ENCODE measurements at regions of chr12 and their contacts with region 1.

Region 1: DNA sequence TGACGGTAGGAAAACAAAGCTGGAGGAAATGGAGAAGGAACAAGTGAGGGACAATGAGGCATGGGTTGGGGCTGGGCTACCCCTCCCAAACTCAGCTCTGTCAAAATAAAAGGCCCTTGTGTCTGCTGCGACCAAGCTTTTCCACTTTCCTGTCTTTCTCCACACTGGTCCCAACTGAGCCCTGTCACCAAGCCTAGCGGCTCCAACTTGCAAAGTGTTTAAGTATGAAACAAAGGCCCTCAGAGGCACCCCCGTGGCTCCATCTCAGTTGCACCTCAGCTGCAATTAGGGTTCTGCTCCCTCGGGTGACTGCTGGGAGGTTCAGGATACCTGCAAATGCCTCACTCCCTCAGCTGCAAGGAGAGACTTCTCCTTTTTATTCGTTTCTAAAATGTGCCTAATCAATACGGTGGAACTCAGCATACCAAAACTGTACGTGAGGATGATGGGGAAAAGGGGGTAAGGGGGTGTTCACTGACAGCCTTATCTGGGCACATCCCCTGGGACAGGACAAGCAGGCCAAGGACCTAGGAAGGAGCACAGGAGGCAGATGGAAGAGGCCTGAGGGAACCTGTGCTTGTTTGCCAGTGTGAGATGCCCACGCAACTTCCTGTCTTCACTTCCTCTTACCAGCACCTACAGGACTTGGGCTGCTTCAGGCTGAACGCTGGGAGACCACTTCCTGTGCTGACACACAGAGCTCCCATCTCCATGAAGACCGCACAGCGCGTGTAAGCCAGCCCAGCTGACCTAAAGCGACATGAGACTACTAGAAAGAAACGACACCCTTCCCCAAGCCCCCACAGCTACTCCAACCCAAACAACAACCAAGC is 8.9 kb downstream of the VAMP1 start:
- DNase-seq: peak; percentile 96
- ATAC-seq: peak; percentile 81
- H3K4me3 Mint-ChIP-seq: peak overlapping the region; percentile 76
- H3K27ac Mint-ChIP-seq: peak overlapping the region; percentile 97
- H3K4me1 Mint-ChIP-seq: peaks cover 83% of the 10 kb centered on the region
- H3K27me3 Mint-ChIP-seq: no peaks in the 10 kb centered on the region
- CTCF ChIP-seq: no peak

Region 2: DNA sequence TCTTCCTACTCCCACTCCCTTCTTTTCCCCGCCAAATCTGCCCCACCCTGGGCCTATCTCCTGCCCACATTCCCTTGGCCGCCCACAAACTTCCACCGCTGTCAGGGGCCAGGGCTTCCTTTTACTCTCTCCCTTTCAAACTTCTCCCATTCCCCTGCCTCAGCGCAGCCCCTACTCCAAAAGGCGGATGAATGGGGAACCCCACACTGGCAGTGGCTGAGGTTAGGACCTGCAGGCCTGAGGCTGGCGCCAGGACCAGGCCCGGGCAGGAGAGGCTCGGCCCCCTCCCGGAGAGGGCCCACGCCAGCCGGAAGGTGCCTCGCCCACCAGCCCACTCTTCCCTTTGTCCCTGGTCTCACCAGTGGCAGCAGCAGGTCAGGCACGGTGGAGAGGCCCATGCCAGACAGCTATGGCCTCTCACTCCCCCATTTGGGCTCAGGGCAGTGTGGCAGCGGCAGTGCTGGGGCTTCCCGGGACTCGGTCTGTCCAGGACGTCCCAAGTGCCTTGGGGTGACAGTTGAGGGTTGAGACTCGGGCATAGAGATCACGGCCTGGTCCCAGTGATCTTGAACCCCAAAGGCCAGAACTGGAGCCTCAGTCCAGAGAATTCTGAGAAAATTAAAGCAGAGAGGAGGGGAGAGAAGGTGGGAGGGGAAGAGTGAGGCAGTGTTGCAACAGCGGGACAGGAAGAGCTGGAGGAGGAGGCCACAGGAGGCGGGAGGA is 120.0 kb before region 1 on chr12 and contains the start of gene TNFRSF1A:
- CTCF ChIA-PET with region 1: interaction called, 31 read pairs
- POLR2A ChIA-PET with region 1: interaction called, 12 read pairs
- intact Hi-C with region 1: loop called (anchors 10 kb)
- DNase-seq: peak; percentile 62
- ATAC-seq: peak; percentile 27
- H3K4me3 Mint-ChIP-seq: no peak within 1 kb of the TSS
- H3K27ac Mint-ChIP-seq: no peak within 1 kb of the TSS
- H3K4me1 Mint-ChIP-seq: peaks cover 40% of the 10 kb centered on the region
- H3K27me3 Mint-ChIP-seq: no peaks in the 10 kb centered on the region
- CTCF ChIP-seq: no peak
- total RNA-seq, gene TNFRSF1A: 40.6 TPM

Region 3: GRCh38 chr12:6434205-6435140 is 27.1 kb before region 1 on chr12:
- CTCF ChIA-PET with region 1: interaction called, 145 read pairs
- POLR2A ChIA-PET with region 1: interaction called, 267 read pairs
- intact Hi-C with region 1: no loop called
- DNase-seq: peak; percentile 72
- ATAC-seq: peak; percentile 84
- H3K4me3 Mint-ChIP-seq: peak overlapping the region; percentile 63
- H3K27ac Mint-ChIP-seq: peak overlapping the region; percentile 90
- H3K4me1 Mint-ChIP-seq: peaks cover 71% of the 10 kb centered on the region
- H3K27me3 Mint-ChIP-seq: no peaks in the 10 kb centered on the region
- CTCF ChIP-seq: no peak

Region 4: DNA sequence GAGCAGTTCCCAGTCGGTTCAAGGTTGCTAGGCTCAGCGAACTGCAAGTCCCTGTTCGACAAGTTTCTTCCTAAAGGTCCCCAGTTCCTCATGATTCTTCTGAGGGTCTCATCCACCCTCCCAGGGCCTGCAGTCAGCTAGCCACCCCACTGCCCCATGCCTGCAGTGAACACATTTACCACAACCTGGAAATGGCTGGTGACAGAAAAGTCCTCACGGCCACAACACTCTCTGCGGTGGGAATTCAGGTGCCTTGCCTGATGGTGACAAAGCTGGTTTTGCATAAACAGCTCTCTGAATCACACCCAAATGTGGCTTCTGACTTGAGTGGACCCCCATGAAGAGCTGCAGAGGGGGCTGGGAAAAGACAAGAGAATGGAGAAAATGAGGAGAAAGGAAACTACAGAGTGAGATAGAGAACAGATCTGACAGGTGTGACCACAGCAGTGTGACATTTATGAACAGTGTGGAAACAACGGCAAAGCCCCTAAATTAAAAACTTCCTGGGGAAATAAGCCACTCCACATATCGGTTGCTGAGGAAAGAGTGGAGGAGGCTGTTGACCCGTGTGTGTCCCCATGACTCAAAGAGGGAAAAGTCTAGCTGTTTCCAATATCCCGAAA is 18.1 kb before region 1 on chr12:
- CTCF ChIA-PET with region 1: interaction called, 78 read pairs
- POLR2A ChIA-PET with region 1: interaction called, 267 read pairs
- intact Hi-C with region 1: no loop called
- DNase-seq: peak; percentile 84
- ATAC-seq: peak; percentile 68
- H3K4me3 Mint-ChIP-seq: peak overlapping the region; percentile 93
- H3K27ac Mint-ChIP-seq: peak overlapping the region; percentile 99
- H3K4me1 Mint-ChIP-seq: peaks cover 61% of the 10 kb centered on the region
- H3K27me3 Mint-ChIP-seq: no peaks in the 10 kb centered on the region
- CTCF ChIP-seq: no peak

Region 5: DNA sequence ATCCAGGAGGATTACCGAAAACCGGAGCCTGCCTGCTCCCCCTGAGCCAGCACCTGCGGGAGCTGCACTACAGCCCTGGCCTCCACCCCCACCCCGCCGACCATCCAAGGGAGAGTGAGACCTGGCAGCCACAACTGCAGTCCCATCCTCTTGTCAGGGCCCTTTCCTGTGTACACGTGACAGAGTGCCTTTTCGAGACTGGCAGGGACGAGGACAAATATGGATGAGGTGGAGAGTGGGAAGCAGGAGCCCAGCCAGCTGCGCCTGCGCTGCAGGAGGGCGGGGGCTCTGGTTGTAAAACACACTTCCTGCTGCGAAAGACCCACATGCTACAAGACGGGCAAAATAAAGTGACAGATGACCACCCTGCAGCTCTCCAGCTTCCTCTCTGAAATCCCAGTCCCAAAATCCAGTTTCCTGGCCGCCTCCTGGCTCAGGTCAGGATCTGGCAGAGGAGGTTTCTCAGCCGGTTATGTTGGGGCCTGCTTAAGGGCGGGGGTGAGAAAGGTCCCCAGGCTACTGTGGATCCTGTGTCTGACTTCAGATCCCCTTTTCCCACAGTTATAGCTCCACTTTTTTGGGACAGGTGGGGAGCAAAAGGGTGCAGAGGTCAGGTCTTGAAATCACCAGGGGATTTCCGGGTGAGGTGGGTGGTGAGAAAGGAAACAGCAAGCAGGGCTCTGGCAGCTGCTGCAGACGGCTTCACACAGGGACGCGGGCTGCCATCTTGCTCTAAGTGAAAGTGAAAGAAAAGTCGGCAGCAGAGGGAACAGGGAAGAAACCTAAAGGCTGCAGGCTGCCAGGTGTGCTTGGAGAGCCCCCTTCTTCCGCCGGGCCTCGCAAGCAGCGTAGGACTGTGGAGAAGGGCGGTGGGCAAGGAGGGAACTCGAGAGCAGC is 10.0 kb before region 1 on chr12 and contains the start of gene TAPBPL:
- CTCF ChIA-PET with region 1: interaction called, 81 read pairs
- POLR2A ChIA-PET with region 1: interaction called, 267 read pairs
- intact Hi-C with region 1: no loop called
- DNase-seq: peak; percentile 94
- ATAC-seq: peak; percentile 77
- H3K4me3 Mint-ChIP-seq: peak within 1 kb of the TSS; percentile 97
- H3K27ac Mint-ChIP-seq: peak within 1 kb of the TSS; percentile 99
- H3K4me1 Mint-ChIP-seq: peaks cover 53% of the 10 kb centered on the region
- H3K27me3 Mint-ChIP-seq: no peaks in the 10 kb centered on the region
- CTCF ChIP-seq: no peak
- total RNA-seq, gene TAPBPL: 23.3 to 28.0 TPM

Region 6: GRCh38 chr12:6493497-6494257 is 32.1 kb after region 1 on chr12 and contains the start of gene NCAPD2:
- CTCF ChIA-PET with region 1: interaction called, 10 read pairs
- POLR2A ChIA-PET with region 1: interaction called, 12 read pairs
- intact Hi-C with region 1: no loop called
- DNase-seq: peak; percentile 98
- ATAC-seq: peak; percentile 88
- H3K4me3 Mint-ChIP-seq: peak within 1 kb of the TSS; percentile 99
- H3K27ac Mint-ChIP-seq: peak within 1 kb of the TSS; percentile 99
- H3K4me1 Mint-ChIP-seq: peaks cover 31% of the 10 kb centered on the region
- H3K27me3 Mint-ChIP-seq: no peaks in the 10 kb centered on the region
- CTCF ChIP-seq: no peak
- total RNA-seq, gene NCAPD2: 195 to 196 TPM

Region 7: DNA sequence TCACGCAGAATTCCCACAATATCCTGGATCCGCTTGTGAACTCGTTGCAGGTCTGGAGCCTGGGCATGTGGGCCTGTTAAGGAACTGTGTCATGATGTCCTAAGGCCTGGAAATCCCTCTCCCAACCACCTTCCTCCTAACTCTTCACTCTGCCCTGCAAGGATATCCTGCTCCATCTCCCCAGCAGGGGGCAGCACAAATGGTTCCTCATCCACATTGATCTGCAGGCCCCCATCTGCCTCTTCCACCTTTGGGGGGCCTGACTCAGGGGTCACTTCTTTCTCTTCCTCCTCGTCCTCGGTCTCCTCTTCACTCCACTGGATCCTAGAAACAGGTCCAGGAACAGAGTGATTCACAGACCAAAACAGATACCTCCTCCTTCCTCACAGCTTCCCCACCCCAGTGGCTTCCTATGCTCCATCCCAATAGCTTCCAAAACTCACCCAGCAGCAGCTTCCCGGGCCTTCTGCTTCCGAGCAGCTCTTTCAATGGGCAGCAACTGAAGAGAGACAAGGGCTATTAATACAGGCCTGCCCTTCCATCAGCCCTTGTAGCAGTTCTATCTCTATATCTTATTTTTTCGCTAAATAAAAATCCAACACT is 101.9 kb after region 1 on chr12:
- CTCF ChIA-PET with region 1: no interaction called
- POLR2A ChIA-PET with region 1: no interaction called
- intact Hi-C with region 1: no loop called
- DNase-seq: peak; percentile 85
- ATAC-seq: peak; percentile 33
- H3K4me3 Mint-ChIP-seq: no peak overlapping the region
- H3K27ac Mint-ChIP-seq: peak overlapping the region; percentile 4
- H3K4me1 Mint-ChIP-seq: peaks cover 47% of the 10 kb centered on the region
- H3K27me3 Mint-ChIP-seq: no peaks in the 10 kb centered on the region
- CTCF ChIP-seq: peak; percentile 76

Region 8: DNA sequence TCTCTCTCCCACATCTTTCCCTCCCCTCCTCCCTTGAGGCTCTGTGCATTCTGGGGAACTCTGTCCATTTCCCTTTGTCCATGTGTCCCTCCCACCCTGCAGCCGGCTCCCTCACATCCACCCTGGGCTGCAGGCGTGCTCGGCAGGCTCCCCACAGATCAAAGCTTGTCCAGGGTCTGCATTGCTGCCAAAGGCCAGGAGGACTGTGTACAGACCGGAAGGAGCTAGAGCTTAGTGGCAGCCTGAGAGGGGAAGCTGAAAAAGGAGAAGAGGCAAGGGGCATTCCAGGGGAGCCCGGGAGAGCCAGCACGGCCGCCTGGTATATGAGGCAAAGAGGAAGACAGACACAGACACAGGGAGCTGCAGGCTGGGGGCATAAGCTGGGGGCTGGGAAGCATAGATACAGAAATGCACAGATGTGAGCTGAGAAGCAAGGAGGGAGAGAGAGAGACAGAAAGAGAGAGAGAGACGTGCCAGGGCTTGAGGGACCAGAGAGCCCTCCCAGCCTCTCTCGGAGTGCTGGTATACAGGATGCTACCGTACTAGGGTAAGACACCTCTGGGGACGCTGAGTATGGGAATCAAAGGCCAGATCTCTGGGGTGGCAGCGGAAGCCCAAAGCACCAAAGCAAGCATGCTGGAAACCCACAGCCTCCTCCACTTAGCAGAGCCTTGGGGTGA is 331.0 kb after region 1 on chr12:
- CTCF ChIA-PET with region 1: no interaction called
- POLR2A ChIA-PET with region 1: no interaction called
- intact Hi-C with region 1: no loop called
- DNase-seq: peak; percentile 62
- ATAC-seq: peak; percentile 81
- H3K4me3 Mint-ChIP-seq: peak overlapping the region; percentile 33
- H3K27ac Mint-ChIP-seq: peak overlapping the region; percentile 14
- H3K4me1 Mint-ChIP-seq: peaks cover 49% of the 10 kb centered on the region
- H3K27me3 Mint-ChIP-seq: peaks cover 14% of the 10 kb centered on the region
- CTCF ChIP-seq: no peak